Lower leg skin (tissue), 4 donors: ENCODE measurements at regions of chr6 and their contacts with region 1.

Region 1: DNA sequence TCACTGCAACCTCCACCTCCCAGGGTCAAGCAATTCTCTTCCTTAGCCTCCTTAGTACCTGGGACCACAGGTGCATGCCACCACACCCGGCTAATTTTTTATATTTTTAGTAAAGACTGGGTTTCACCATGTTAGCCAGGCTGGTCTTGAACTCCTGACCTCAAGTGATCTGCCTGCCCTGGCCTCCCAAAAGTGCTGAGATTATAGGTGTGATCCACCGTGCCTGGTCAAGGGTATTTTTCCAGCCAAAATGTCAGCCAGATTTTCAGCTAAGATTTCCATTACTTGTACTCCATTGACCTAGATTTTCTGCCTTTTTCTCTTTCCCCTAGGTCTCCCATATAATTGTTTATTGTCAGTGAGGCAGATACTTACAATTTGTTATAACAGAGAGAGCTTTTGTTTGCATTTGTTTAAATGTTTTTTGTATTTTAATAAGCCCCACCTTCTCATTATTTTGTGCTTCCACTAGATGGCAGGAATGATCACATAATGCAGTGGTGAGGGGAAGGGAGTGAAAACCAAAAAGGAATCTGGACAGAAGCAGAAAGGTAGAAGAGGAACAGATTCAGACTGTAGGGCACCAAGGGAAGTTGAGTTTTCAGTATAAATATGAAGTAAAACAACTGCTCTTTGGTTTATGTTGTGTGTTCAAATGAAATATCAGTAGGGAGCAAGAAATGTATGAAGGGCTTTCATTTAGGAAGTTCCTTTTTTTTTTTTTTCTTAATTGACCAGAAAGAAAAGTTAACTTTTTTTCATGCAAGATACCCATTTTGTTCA is 29.7 kb downstream of the RPF2 start:
- DNase-seq: peak in 1 of 2 donors; percentile 62
- H3K4me3 ChIP-seq: no peak overlapping the region
- CTCF ChIP-seq: peak in 1 of 3 donors; percentile 7
- POLR2A ChIP-seq: no peak

Region 2: GRCh38 chr6:111207141-111207850 is 195.7 kb after region 1 on chr6:
- intact Hi-C with region 1: loop called (anchors 5 kb)
- DNase-seq: no peak
- H3K4me3 ChIP-seq: no peak overlapping the region
- CTCF ChIP-seq: no peak
- POLR2A ChIP-seq: no peak